ENCODE measurements at regions of chr16 and their contacts with region 1.

Region 1: GRCh38 chr16:14529010-14529669 is 100.9 kb downstream of the PARN start:
- DNase-seq: peak; percentile 66
- ATAC-seq: peak; percentile 86
- H3K4me3 ChIP-seq: no peak overlapping the region
- H3K27ac ChIP-seq: peak overlapping the region; percentile 41; the same call in 1 of the 2 replicates
- H3K4me1 ChIP-seq: peaks cover 6 to 13% of the 10 kb centered on the region in 2 experiments; a peak in 3 of 4 replicates
- H3K27me3 ChIP-seq: no peaks in the 10 kb centered on the region
- CTCF ChIP-seq: peak; percentile 67 to 85 (median 81)
- POLR2A ChIP-seq: no peak
- RAD21 ChIP-seq: peak; percentile 99

Region 2: GRCh38 chr16:14249291-14250032 is 279.7 kb before region 1 on chr16:
- CTCF ChIA-PET with region 1: no interaction called
- POLR2A ChIA-PET with region 1: no interaction called
- RAD21 ChIA-PET with region 1: no interaction called
- intact Hi-C with region 1: loop called (anchors 1 kb)
- DNase-seq: peak; percentile 12
- ATAC-seq: peak; percentile 63
- H3K4me3 ChIP-seq: no peak overlapping the region
- H3K27ac ChIP-seq: no peak overlapping the region
- H3K4me1 ChIP-seq: no peaks in the 10 kb centered on the region
- H3K27me3 ChIP-seq: no peaks in the 10 kb centered on the region
- CTCF ChIP-seq: peak; percentile 48 to 98 (median 88); a peak in 5 of 6 replicates
- POLR2A ChIP-seq: no peak
- RAD21 ChIP-seq: peak; percentile 74

Region 3: DNA sequence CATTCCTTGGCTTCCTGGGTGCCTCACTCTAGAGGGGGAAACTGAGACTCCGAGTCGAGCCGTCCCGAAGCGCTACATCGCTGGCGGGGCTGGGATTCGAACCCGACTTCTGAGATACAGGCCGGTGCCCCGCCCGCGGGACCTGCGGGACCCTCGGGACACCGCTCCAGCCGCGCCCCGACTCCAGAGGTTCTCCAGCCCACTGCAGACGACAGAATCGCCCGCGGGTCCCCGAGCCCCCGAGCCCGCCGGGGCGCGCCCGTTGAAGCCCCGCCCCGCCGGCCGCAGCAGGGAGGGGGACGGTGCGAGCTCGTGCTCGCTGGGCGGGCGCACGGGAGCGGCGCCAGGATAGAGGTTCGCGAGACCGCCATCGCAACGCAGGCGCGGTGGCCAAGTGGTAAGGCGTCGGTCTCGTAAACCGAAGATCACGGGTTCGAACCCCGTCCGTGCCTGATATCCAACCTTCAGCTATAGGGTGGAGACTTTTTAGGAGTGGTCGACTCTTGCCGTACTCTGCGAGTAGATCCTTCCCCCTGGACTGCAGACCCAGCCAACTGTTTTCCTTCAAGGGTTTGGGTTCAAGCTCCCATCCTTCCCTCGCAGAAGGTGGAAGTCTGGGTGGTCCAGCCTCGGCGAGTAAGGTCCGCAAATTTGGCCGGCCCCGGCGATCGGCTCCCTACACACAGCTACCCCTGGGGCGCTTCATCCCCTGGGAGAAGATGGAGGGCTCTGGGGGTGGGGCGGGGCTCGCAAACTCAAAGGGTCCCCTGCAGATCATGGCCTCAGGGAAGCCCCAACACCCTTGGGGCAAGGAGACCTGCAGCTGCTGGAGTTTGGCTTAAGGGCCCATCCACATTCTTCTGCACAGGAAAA is 243.4 kb before region 1 on chr16:
- CTCF ChIA-PET with region 1: no interaction called
- POLR2A ChIA-PET with region 1: no interaction called
- RAD21 ChIA-PET with region 1: no interaction called
- intact Hi-C with region 1: loop called (anchors 5 kb)
- DNase-seq: peak; percentile 82
- ATAC-seq: peak; percentile 90
- H3K4me3 ChIP-seq: peak overlapping the region; percentile 64 to 66
- H3K27ac ChIP-seq: peak overlapping the region; percentile 66
- H3K4me1 ChIP-seq: peaks cover 3 to 9% of the 10 kb centered on the region in 2 experiments; a peak in 2 of 4 replicates
- H3K27me3 ChIP-seq: no peaks in the 10 kb centered on the region
- CTCF ChIP-seq: no peak; a peak in 1 of 6 replicates
- POLR2A ChIP-seq: no peak
- RAD21 ChIP-seq: no peak; the same call in 1 of the 2 replicates

Region 4: GRCh38 chr16:14369730-14370624 is 159.2 kb before region 1 on chr16:
- CTCF ChIA-PET with region 1: no interaction called
- POLR2A ChIA-PET with region 1: no interaction called
- RAD21 ChIA-PET with region 1: no interaction called
- intact Hi-C with region 1: loop called (anchors 5 kb)
- DNase-seq: no peak
- ATAC-seq: no peak
- H3K4me3 ChIP-seq: no peak overlapping the region
- H3K27ac ChIP-seq: no peak overlapping the region
- H3K4me1 ChIP-seq: peaks cover 9 to 33% of the 10 kb centered on the region in 2 experiments
- H3K27me3 ChIP-seq: no peaks in the 10 kb centered on the region
- CTCF ChIP-seq: no peak
- POLR2A ChIP-seq: no peak
- RAD21 ChIP-seq: no peak

Measured in HCT116 (cell line).